ENCODE measurements at regions of chr19 and their contacts with region 1.

Region 1: DNA sequence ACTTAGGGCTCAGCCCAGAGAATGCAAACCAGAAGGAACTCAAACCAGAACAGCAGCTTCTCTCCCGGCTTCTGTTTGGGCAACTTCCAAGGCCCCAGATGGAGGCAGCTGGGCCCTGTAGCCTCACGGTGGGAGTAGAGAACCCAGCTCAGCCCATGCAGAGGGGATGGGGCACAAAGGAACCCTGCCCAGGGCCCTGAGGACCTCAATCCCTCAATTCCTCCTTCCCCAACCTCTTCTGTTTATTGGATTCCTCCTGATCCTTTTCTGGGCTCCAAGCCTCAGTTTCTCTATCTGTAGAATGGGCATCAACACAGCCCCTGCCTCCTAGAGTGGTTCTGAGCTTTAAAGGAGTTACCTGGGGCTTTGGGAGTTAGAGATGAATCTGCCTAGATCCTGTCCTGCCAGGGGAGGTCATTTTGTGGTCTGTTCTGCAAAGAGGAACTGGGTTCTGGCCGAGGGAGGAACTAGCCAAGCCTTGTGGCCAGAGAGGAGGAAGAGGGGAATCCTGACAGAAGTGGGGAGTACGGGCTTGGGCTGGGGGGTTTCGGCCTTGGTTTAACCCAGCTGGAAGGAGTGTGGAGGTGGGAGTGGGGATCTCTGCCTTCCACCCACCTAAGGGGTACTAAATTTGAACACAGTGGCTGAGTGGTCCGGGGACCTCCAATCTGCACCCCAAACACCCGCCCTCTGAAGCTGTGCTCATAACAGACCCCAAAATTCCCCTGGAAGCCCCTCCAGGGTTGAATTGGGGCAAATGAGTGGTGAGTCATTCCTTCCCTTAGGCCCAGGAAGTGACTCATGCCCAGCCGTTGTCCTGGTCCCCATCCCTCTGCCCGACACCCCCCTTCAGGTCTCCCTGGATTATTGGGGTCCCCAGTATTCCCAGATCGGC is 2.7 kb downstream of the ADGRE5 start:
- DNase-seq: peak; percentile 50
- H3K4me3 Mint-ChIP-seq: peak overlapping the region; percentile 63
- H3K27ac Mint-ChIP-seq: peak overlapping the region; percentile 85
- H3K4me1 Mint-ChIP-seq: peaks cover 34% of the 10 kb centered on the region
- H3K27me3 Mint-ChIP-seq: no peaks in the 10 kb centered on the region
- CTCF ChIP-seq: no peak

Region 2: GRCh38 chr19:14337510-14337909 is 46.4 kb before region 1 on chr19:
- CTCF ChIA-PET with region 1: no interaction called
- POLR2A ChIA-PET with region 1: no interaction called
- intact Hi-C with region 1: no loop called
- DNase-seq: peak; percentile 51
- H3K4me3 Mint-ChIP-seq: no peak overlapping the region
- H3K27ac Mint-ChIP-seq: no peak overlapping the region
- H3K4me1 Mint-ChIP-seq: no peaks in the 10 kb centered on the region
- H3K27me3 Mint-ChIP-seq: no peaks in the 10 kb centered on the region
- CTCF ChIP-seq: no peak

Region 3: DNA sequence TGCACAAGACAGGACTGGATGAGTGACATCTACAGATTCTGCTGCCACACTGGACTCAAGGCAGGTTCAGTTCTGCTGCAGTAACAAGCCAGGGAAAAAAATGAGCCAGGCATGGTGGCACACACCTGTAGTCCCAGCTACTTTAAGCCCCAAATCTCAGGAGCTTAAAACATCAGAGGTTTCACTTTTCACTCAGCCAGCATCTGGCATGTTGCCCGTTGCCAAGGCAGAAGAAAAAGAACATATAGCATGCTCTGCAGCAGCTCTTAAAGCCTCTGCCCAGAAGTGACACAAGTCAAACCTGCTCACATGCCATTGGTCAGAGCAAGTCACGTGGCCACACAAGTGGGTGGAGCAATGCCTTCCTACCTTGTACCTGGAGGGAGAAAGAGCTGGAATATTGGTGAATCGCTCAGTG is 17.4 kb before region 1 on chr19:
- CTCF ChIA-PET with region 1: interaction called, 4 read pairs
- POLR2A ChIA-PET with region 1: interaction called, 27 read pairs
- intact Hi-C with region 1: no loop called
- DNase-seq: peak; percentile 94
- H3K4me3 Mint-ChIP-seq: no peak overlapping the region
- H3K27ac Mint-ChIP-seq: peak overlapping the region; percentile 46
- H3K4me1 Mint-ChIP-seq: peaks cover 20% of the 10 kb centered on the region
- H3K27me3 Mint-ChIP-seq: no peaks in the 10 kb centered on the region
- CTCF ChIP-seq: no peak

Region 4: DNA sequence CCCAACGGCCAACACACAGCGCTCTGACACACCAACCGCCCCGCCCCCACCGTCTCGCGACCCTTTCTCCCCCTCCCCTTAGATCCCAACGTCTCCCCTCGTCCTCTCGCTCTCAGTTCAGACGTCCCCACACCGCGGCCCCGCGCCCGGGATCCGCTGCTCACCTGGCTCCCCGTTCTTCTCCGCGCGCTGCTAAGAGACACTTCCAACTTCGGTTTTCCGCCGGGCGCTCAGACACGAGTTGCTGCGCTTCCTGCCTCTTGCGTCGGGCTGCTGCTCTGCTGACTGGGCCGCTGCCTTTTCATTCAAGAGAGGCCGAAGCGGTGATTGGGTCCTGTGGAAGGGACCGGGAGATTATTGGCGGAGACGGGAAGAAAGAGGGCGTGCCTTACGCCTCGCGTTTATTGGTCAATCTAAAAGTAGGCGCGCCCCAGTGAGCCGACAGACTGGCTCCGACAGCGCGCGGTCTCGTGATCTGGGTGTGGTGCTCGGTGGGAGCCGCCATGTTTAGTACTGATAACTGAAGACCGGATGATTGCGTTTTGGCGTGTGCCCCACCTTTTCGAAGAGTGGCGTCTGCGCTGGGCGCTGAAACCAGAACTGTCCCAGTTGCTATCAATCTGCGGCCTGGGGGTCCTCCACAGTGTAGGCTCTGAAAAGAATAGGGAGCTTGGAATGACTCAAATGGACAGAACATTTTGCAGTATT is 35.4 kb after region 1 on chr19 and contains the start of gene DDX39A:
- CTCF ChIA-PET with region 1: no interaction called
- POLR2A ChIA-PET with region 1: interaction called, 22 read pairs
- intact Hi-C with region 1: loop called (anchors 5 kb)
- DNase-seq: peak; percentile 100
- H3K4me3 Mint-ChIP-seq: peak within 1 kb of the TSS; percentile 79
- H3K27ac Mint-ChIP-seq: peak within 1 kb of the TSS; percentile 88
- H3K4me1 Mint-ChIP-seq: peaks cover 23% of the 10 kb centered on the region
- H3K27me3 Mint-ChIP-seq: no peaks in the 10 kb centered on the region
- CTCF ChIP-seq: no peak
- total RNA-seq, gene DDX39A: 62.1 and 65.4 TPM in 2 replicates

Region 5: GRCh38 chr19:14432791-14433553 is 49.1 kb after region 1 on chr19 and contains the start of gene PKN1:
- CTCF ChIA-PET with region 1: no interaction called
- POLR2A ChIA-PET with region 1: interaction called, 3 read pairs
- intact Hi-C with region 1: loop called (anchors 5 kb)
- DNase-seq: no peak
- H3K4me3 Mint-ChIP-seq: peak within 1 kb of the TSS; percentile 63
- H3K27ac Mint-ChIP-seq: peak within 1 kb of the TSS; percentile 0
- H3K4me1 Mint-ChIP-seq: peaks cover 10% of the 10 kb centered on the region
- H3K27me3 Mint-ChIP-seq: no peaks in the 10 kb centered on the region
- CTCF ChIP-seq: no peak
- total RNA-seq, gene PKN1: 94.8 and 141 TPM in 2 replicates

Measured in MCF 10A (cell line).